ENCODE measurements at regions of chr5 and their contacts with region 1.

Region 1: GRCh38 chr5:112921833-112922817 is at the start of gene REEP5:
- DNase-seq: peak; percentile 78
- ATAC-seq: peak; percentile 83
- H3K4me3 ChIP-seq: peak within 1 kb of the TSS; percentile 98
- H3K27ac ChIP-seq: peak within 1 kb of the TSS; percentile 66
- H3K4me1 ChIP-seq: peaks cover 13% of the 10 kb centered on the region; the same call in 1 of the 2 replicates
- H3K27me3 ChIP-seq: no peaks in the 10 kb centered on the region
- CTCF ChIP-seq: peak; percentile 55
- total RNA-seq, gene REEP5: 61.9 and 85.2 TPM in 2 replicates

Region 2: GRCh38 chr5:112551419-112552032 is 370.6 kb before region 1 on chr5:
- CTCF ChIA-PET with region 1: no interaction called
- POLR2A ChIA-PET with region 1: no interaction called
- intact Hi-C with region 1: loop called (anchors 2 kb)
- DNase-seq: peak; percentile 65
- ATAC-seq: peak; percentile 55; the same call in 1 of the 2 replicates
- H3K4me3 ChIP-seq: no peak overlapping the region
- H3K27ac ChIP-seq: no peak overlapping the region
- H3K4me1 ChIP-seq: peaks cover 24% of the 10 kb centered on the region
- H3K27me3 ChIP-seq: no peaks in the 10 kb centered on the region
- CTCF ChIP-seq: peak; percentile 78

Region 3: GRCh38 chr5:112757468-112758208 is 164.5 kb before region 1 on chr5:
- CTCF ChIA-PET with region 1: no interaction called
- POLR2A ChIA-PET with region 1: no interaction called
- intact Hi-C with region 1: loop called (anchors 5 kb)
- DNase-seq: peak; percentile 79
- ATAC-seq: peak; percentile 56
- H3K4me3 ChIP-seq: no peak overlapping the region
- H3K27ac ChIP-seq: 0 out of 2 replicates have a peak overlapping the region, but pooled peaks have one; percentile 6
- H3K4me1 ChIP-seq: peaks cover 22% of the 10 kb centered on the region
- H3K27me3 ChIP-seq: no peaks in the 10 kb centered on the region
- CTCF ChIP-seq: peak; percentile 73

Region 4: DNA sequence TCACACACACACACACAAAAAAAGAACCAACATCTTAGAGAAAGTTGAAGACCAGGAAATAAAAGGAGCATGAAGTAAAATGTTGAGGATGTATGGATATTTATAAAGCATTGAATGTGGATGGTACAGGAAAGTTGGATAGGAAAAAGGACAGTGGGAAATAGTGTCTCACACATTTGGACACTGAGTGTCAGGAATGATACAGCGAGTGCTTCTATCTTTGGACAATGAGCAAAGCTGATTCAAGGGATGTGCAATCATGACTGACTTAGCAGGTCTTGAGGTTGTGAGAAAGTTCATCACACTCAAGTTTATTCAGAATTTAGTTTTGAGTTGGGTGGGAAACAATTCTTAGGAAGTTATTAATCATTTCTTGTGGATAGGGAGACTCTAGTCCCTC is 111.1 kb before region 1 on chr5:
- CTCF ChIA-PET with region 1: no interaction called
- POLR2A ChIA-PET with region 1: no interaction called
- intact Hi-C with region 1: no loop called
- DNase-seq: no peak
- ATAC-seq: no peak
- H3K4me3 ChIP-seq: no peak overlapping the region
- H3K27ac ChIP-seq: no peak overlapping the region
- H3K4me1 ChIP-seq: no peaks in the 10 kb centered on the region
- H3K27me3 ChIP-seq: no peaks in the 10 kb centered on the region
- CTCF ChIP-seq: no peak

Region 5: DNA sequence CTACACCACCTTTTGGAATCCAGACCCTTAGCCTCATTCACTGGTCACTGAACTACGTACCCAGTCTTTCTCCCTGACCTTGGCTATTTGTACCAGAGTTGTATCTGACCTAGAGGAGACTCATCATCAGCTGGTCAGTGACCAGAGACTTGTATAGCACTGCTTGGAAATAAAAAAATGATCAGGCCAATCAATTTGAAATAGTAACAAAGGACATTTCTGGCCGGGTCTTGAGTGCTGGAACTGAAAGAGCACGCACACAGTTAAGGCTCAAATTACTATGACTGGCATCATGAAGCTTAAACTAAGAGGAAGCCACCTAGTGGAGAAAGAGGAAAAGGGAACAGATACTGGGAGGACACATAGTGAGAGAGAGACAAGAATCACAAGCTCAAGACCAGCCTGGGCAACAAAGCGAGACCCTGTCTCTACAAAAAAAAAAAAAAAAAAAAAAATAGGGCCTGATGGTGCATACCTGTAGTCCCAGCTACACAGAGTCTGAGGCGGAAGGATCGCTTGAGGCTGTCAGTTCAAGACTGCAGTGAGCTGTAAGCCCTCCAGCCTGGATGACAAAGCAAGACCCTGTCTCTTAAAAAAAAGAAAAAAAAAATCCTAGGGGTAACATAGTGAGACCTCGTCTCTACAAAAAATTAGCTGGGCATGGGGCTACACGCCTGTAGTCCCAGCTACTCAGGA is 73.9 kb before region 1 on chr5:
- CTCF ChIA-PET with region 1: interaction called, 8 read pairs
- POLR2A ChIA-PET with region 1: interaction called, 10 read pairs
- intact Hi-C with region 1: no loop called
- DNase-seq: peak; percentile 66
- ATAC-seq: peak; percentile 99
- H3K4me3 ChIP-seq: no peak overlapping the region
- H3K27ac ChIP-seq: no peak overlapping the region
- H3K4me1 ChIP-seq: no peaks in the 10 kb centered on the region
- H3K27me3 ChIP-seq: no peaks in the 10 kb centered on the region
- CTCF ChIP-seq: peak; percentile 67

Region 6: GRCh38 chr5:112860929-112861637 is 61.0 kb before region 1 on chr5 and contains the start of gene SRP19:
- CTCF ChIA-PET with region 1: no interaction called
- POLR2A ChIA-PET with region 1: no interaction called
- intact Hi-C with region 1: loop called (anchors 5 kb)
- DNase-seq: peak; percentile 94
- ATAC-seq: peak; percentile 91
- H3K4me3 ChIP-seq: peak within 1 kb of the TSS; percentile 98
- H3K27ac ChIP-seq: peak within 1 kb of the TSS; percentile 41
- H3K4me1 ChIP-seq: peaks cover 16% of the 10 kb centered on the region
- H3K27me3 ChIP-seq: no peaks in the 10 kb centered on the region
- CTCF ChIP-seq: no peak
- total RNA-seq, gene SRP19: 39.9 and 42.9 TPM in 2 replicates

Region 7: GRCh38 chr5:112958093-112959088 is 36.3 kb after region 1 on chr5:
- CTCF ChIA-PET with region 1: no interaction called
- POLR2A ChIA-PET with region 1: interaction called, 4 read pairs
- intact Hi-C with region 1: loop called (anchors 2 kb)
- DNase-seq: peak; percentile 96
- ATAC-seq: peak; percentile 86
- H3K4me3 ChIP-seq: peak overlapping the region; percentile 48
- H3K27ac ChIP-seq: peak overlapping the region; percentile 83
- H3K4me1 ChIP-seq: peaks cover 49% of the 10 kb centered on the region
- H3K27me3 ChIP-seq: no peaks in the 10 kb centered on the region
- CTCF ChIP-seq: no peak

Region 8: GRCh38 chr5:112976432-112977309 is 54.5 kb after region 1 on chr5 and contains the start of gene DCP2:
- CTCF ChIA-PET with region 1: no interaction called
- POLR2A ChIA-PET with region 1: no interaction called
- intact Hi-C with region 1: loop called (anchors 5 kb)
- DNase-seq: peak; percentile 96
- ATAC-seq: peak; percentile 96
- H3K4me3 ChIP-seq: peak within 1 kb of the TSS; percentile 99
- H3K27ac ChIP-seq: peak within 1 kb of the TSS; percentile 66
- H3K4me1 ChIP-seq: peaks cover 18% of the 10 kb centered on the region
- H3K27me3 ChIP-seq: no peaks in the 10 kb centered on the region
- CTCF ChIP-seq: no peak
- total RNA-seq, gene DCP2: 26.7 and 33.6 TPM in 2 replicates